ENCODE measurements at regions of chr2 and their contacts with region 1.

Region 1: DNA sequence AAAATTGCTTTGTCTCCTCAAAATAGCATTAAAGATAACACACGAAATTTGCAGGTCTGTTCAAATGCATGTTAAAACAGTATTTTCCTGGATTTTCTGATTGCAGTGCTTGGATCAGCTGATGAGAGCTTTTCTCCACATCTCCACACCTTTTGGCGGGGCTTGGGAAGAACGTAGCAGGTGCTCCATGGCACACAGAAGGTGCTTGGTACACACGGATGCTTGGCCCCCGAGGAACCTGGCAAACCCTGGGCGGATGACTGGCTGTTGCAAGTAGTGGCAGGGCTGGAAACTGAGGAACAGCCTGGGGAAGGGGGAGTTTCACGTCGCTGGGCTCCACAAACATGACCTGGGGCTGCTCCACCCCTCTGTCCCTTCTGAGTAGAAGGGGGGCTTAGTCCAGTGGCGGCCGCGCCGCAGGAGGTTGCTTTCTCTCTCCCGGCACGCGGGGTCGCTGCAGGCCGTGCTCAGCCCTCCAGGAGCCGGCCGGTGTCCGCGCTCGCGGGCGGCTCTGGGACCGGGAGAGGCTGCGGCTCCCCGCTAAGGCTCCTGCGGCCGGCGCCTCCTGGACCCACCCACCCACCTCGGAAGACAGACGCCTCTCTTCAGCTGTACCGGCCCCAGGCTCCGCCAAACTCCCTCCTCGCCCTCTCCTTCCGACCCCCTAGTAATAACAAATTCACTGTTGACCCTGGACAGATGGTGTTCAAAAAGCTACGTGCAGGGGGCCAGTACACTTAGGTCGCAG is 69.3 kb downstream of the MARCO start:
- DNase-seq: peak; percentile 21 to 87
- H3K4me3 ChIP-seq: peak overlapping the region in 3 of 4 experiments; percentile 6 to 51 (median 19); a peak in 4 of 8 replicates
- H3K27ac ChIP-seq: no peak overlapping the region
- H3K4me1 ChIP-seq: peaks cover 0 to 3% (median under 1%) of the 10 kb centered on the region in 4 experiments; a peak in 4 of 7 replicates
- H3K27me3 ChIP-seq: peaks cover 0 to 4% (median 3%) of the 10 kb centered on the region in 4 experiments; a peak in 5 of 7 replicates
- CTCF ChIP-seq: peak; percentile 73 to 80 (median 74)
- EP300 ChIP-seq: no peak
- POLR2A ChIP-seq: no peak
- RAD21 ChIP-seq: peak; percentile 88 to 92

Region 2: DNA sequence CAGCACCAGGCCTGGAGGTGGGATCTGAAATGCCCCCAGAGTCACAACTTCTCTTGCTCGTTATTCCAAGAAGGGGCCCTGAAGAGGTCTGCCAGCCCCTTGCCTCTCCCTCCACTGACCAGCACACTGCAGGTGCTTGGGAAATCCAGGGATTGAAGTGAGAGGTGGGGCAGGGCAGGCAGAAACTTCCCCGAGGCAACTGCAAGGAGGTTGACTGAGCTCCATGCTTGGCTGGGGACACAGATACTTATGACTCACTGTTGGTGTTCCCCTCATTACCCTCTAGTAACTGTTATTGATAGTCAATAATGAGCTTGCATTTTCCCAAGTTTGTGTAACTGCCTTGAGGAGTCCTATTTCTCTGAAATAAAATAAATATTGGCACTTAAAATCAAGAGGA is 21.9 kb before region 1 on chr2:
- CTCF ChIA-PET with region 1: interaction called, 13 read pairs
- POLR2A ChIA-PET with region 1: no interaction called
- DNase-seq: peak in 1 of 2 experiments; percentile 23
- H3K4me3 ChIP-seq: no peak overlapping the region
- H3K27ac ChIP-seq: no peak overlapping the region
- H3K4me1 ChIP-seq: no peaks in the 10 kb centered on the region; a peak in 1 of 7 replicates
- H3K27me3 ChIP-seq: no peaks in the 10 kb centered on the region
- CTCF ChIP-seq: no peak
- EP300 ChIP-seq: no peak
- POLR2A ChIP-seq: no peak
- RAD21 ChIP-seq: no peak

Region 3: GRCh38 chr2:119076713-119077112 is 65.4 kb after region 1 on chr2:
- CTCF ChIA-PET with region 1: no interaction called
- POLR2A ChIA-PET with region 1: no interaction called
- DNase-seq: no peak
- H3K4me3 ChIP-seq: no peak overlapping the region
- H3K27ac ChIP-seq: no peak overlapping the region
- H3K4me1 ChIP-seq: no peaks in the 10 kb centered on the region
- H3K27me3 ChIP-seq: peaks cover 0 to 2% (median 0%) of the 10 kb centered on the region in 4 experiments; a peak in 2 of 7 replicates
- CTCF ChIP-seq: no peak
- EP300 ChIP-seq: no peak
- POLR2A ChIP-seq: no peak
- RAD21 ChIP-seq: no peak

Measured in H1 (cell line).